Panc1 (cell line): ENCODE measurements at regions of chr2 and their contacts with region 1.

Region 1: GRCh38 chr2:42587526-42588117 is 19.2 kb downstream of the MTA3 start:
- DNase-seq: no peak
- ATAC-seq: no peak
- H3K4me3 ChIP-seq: no peak overlapping the region
- H3K27ac ChIP-seq: no peak overlapping the region
- H3K4me1 ChIP-seq: no peaks in the 10 kb centered on the region
- H3K27me3 ChIP-seq: no peaks in the 10 kb centered on the region
- CTCF ChIP-seq: no peak

Region 2: DNA sequence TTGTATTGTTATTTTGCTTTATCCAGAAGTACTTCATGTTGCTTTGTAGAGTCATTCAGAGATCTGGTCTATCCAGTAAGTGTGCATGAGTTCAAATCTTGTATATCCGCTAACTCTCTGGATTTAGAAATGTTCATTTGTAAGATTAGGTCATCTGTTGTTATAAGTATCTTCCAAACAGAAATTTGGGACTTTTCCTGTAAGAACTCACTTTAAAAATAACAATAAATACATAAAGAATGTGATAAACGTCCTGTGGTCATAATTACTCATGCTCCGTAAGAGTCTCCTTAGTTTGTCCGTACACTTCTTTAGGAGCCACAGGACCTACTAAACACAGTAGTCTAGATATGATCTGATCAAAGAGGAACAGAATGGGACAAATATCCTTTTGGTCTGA is 1435.9 kb before region 1 on chr2:
- CTCF ChIA-PET with region 1: no interaction called
- POLR2A ChIA-PET with region 1: no interaction called
- in situ Hi-C with region 1: no loop called
- intact Hi-C with region 1: no loop called
- DNase-seq: no peak
- ATAC-seq: no peak
- H3K4me3 ChIP-seq: no peak overlapping the region
- H3K27ac ChIP-seq: no peak overlapping the region
- H3K4me1 ChIP-seq: no peaks in the 10 kb centered on the region
- H3K27me3 ChIP-seq: no peaks in the 10 kb centered on the region
- CTCF ChIP-seq: no peak

Region 3: GRCh38 chr2:42404676-42405075 is 182.9 kb before region 1 on chr2:
- CTCF ChIA-PET with region 1: no interaction called
- POLR2A ChIA-PET with region 1: interaction called, 18 read pairs
- in situ Hi-C with region 1: no loop called
- intact Hi-C with region 1: no loop called
- DNase-seq: no peak
- ATAC-seq: no peak
- H3K4me3 ChIP-seq: no peak overlapping the region
- H3K27ac ChIP-seq: no peak overlapping the region
- H3K4me1 ChIP-seq: no peaks in the 10 kb centered on the region
- H3K27me3 ChIP-seq: no peaks in the 10 kb centered on the region
- CTCF ChIP-seq: no peak

Region 4: GRCh38 chr2:42568401-42569115 is 19.1 kb before region 1 on chr2 and contains the start of gene MTA3:
- CTCF ChIA-PET with region 1: no interaction called
- POLR2A ChIA-PET with region 1: interaction called, 10 read pairs
- in situ Hi-C with region 1: no loop called
- intact Hi-C with region 1: no loop called
- DNase-seq: no peak
- ATAC-seq: peak; percentile 79
- H3K4me3 ChIP-seq: peak within 1 kb of the TSS; percentile 69 to 82
- H3K27ac ChIP-seq: peak within 1 kb of the TSS; percentile 95
- H3K4me1 ChIP-seq: peaks cover 28% of the 10 kb centered on the region
- H3K27me3 ChIP-seq: no peaks in the 10 kb centered on the region
- CTCF ChIP-seq: no peak
- total RNA-seq, gene MTA3: 65.6 TPM

Region 5: GRCh38 chr2:43194121-43194869 is 606.7 kb after region 1 on chr2:
- CTCF ChIA-PET with region 1: no interaction called
- POLR2A ChIA-PET with region 1: no interaction called
- in situ Hi-C with region 1: no loop called
- intact Hi-C with region 1: no loop called
- DNase-seq: no peak
- ATAC-seq: no peak
- H3K4me3 ChIP-seq: no peak overlapping the region
- H3K27ac ChIP-seq: no peak overlapping the region
- H3K4me1 ChIP-seq: peaks cover 5% of the 10 kb centered on the region; the same call in 1 of the 2 replicates
- H3K27me3 ChIP-seq: no peaks in the 10 kb centered on the region
- CTCF ChIP-seq: no peak